Gastrocnemius medialis (tissue), 4 donors: ENCODE measurements at regions of chr2 and their contacts with region 1.

Region 1: GRCh38 chr2:44184106-44184505 is 15.4 kb downstream of the PPM1B start:
- DNase-seq: no peak
- ATAC-seq: no peak
- H3K4me3 ChIP-seq: no peak overlapping the region
- H3K27ac ChIP-seq: peak overlapping the region in 1 of 4 donors; percentile 29
- H3K4me1 ChIP-seq: peaks cover 49 to 55% of the 10 kb centered on the region in 2 donors
- H3K27me3 ChIP-seq: no peaks in the 10 kb centered on the region
- CTCF ChIP-seq: no peak
- POLR2A ChIP-seq: no peak

Region 2: DNA sequence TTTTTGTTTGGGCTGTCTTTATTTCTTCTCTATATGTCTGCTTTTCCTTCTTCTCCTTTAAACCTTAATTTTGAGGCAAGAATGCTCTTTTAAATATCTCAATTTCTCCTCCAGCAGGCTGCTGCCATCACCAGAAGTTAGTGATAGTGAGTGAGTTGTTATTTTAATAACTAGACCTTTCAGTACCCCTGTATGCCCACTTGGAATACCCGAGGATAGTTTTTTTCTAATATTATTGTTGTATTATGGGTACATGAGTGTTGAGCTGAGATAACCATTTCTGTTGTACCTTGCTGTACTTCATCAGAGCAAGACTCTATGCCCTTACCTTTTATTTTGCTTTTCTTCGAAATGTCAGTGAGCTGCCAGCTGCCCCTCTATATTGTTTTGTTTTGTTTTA is 34.7 kb after region 1 on chr2:
- in situ Hi-C with region 1: no loop called
- intact Hi-C with region 1: loop called (anchors 5 kb)
- DNase-seq: no peak
- ATAC-seq: no peak
- H3K4me3 ChIP-seq: no peak overlapping the region
- H3K27ac ChIP-seq: no peak overlapping the region
- H3K4me1 ChIP-seq: peaks cover 0 to 7% of the 10 kb centered on the region in 2 donors
- H3K27me3 ChIP-seq: no peaks in the 10 kb centered on the region
- CTCF ChIP-seq: no peak
- POLR2A ChIP-seq: no peak

Region 3: GRCh38 chr2:44515416-44515815 is 331.3 kb after region 1 on chr2:
- in situ Hi-C with region 1: no loop called
- intact Hi-C with region 1: no loop called
- DNase-seq: no peak
- ATAC-seq: no peak
- H3K4me3 ChIP-seq: no peak overlapping the region
- H3K27ac ChIP-seq: no peak overlapping the region
- H3K4me1 ChIP-seq: no peaks in the 10 kb centered on the region
- H3K27me3 ChIP-seq: no peaks in the 10 kb centered on the region
- CTCF ChIP-seq: no peak
- POLR2A ChIP-seq: no peak